B cell (primary cell): ENCODE measurements at regions of chr14 and their contacts with region 1.

Region 1: DNA sequence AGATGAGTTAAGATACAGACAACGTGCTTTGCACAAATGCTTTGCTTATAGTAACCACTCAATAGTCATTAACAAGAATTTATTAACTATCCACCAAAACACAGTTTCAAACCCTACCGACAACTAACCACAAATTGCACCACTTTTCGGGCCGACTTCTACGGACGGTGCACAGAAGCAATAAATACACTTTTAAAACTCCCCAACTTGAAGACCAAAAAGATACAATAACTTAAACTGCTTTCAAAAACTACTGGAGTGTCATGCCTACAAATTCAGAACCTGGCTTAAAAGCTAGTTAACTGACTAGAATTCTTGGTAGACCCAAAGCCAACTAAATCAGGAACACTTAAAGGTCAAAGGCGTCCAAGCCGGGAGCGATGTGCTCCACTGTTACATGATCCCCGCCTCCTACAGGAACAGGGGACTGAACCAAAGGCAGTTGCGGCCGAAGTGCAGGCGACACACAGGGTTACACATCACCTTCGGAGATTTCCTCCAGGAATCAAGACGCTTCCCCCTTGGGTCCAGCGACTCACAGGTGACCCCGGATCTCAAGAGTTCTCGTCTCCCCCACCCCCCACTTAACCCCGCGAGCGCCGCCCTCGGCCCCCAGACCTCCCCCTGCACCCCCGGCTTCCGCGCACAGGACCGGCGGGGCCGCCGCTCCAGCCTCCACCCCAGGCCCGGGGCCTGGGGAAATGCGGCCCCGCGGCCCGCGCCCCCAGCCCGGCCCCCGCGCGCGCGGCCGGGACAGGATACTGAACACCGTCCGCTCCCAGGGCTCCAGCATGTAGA is 507 bp downstream of the SPTSSA start:
- DNase-seq: peak; percentile 50
- ATAC-seq: no peak
- H3K4me3 ChIP-seq: peak overlapping the region; percentile 50 to 95 (median 64)
- H3K4me3 Mint-ChIP-seq: peak overlapping the region; percentile 86
- H3K27ac ChIP-seq: peak overlapping the region; percentile 16 to 60
- H3K27ac Mint-ChIP-seq: peak overlapping the region; percentile 91
- H3K4me1 ChIP-seq: peaks cover 8 to 15% of the 10 kb centered on the region in 2 donors
- H3K4me1 Mint-ChIP-seq: peaks cover 18% of the 10 kb centered on the region
- H3K27me3 ChIP-seq: no peaks in the 10 kb centered on the region
- H3K27me3 Mint-ChIP-seq: no peaks in the 10 kb centered on the region
- CTCF ChIP-seq: no peak

Region 2: DNA sequence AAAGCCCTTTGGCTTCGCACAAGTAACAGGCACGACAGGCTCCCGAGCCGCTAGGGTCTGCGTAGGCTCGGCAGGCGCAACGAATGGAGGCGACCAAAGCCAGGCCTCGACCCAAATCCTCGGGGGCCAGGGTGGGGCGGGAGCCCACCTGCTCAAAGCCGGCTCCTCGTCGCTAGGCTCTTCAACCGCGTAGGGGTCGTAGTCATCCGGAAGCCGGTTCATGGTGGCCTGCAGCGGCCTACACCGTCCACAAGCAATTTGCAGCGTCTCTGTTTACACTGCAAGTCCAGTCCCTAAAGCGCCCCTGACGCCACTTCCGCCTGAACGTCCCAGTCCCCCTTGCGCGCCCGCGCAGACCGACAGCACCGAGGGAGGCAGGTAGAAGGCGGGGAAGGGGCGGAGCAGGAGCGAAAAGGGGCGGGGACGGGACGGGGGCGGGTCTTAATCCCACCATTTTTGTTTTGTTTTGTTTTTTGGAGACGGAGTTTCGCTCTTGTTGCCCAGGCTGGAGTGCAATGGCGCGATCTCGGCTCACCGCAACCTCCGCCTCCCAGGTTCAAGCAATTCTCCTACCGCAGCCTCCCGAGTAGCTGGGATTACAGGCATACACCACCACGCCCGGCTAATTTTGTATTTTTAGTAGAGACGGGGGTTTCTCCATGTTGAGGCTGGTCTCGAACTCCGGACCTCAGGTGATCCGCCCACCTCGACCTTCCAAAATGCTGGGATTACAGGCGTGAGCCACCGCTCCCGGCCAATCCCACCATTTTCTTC is 78.1 kb after region 1 on chr14 and contains the start of gene EAPP:
- CTCF ChIA-PET with region 1: no interaction called
- POLR2A ChIA-PET with region 1: no interaction called
- intact Hi-C with region 1: loop called (anchors 5 kb)
- DNase-seq: peak; percentile 96
- ATAC-seq: peak; percentile 99
- H3K4me3 ChIP-seq: peak within 1 kb of the TSS; percentile 44 to 97 (median 89)
- H3K4me3 Mint-ChIP-seq: peak within 1 kb of the TSS; percentile 99
- H3K27ac ChIP-seq: peak within 1 kb of the TSS; percentile 91 to 97
- H3K27ac Mint-ChIP-seq: peak within 1 kb of the TSS; percentile 99
- H3K4me1 ChIP-seq: peaks cover 18 to 24% of the 10 kb centered on the region in 2 donors
- H3K4me1 Mint-ChIP-seq: peaks cover 21% of the 10 kb centered on the region
- H3K27me3 ChIP-seq: no peaks in the 10 kb centered on the region
- H3K27me3 Mint-ChIP-seq: no peaks in the 10 kb centered on the region
- CTCF ChIP-seq: no peak
- total RNA-seq, gene EAPP: 54.8 and 58.0 TPM in 2 replicates

Region 3: DNA sequence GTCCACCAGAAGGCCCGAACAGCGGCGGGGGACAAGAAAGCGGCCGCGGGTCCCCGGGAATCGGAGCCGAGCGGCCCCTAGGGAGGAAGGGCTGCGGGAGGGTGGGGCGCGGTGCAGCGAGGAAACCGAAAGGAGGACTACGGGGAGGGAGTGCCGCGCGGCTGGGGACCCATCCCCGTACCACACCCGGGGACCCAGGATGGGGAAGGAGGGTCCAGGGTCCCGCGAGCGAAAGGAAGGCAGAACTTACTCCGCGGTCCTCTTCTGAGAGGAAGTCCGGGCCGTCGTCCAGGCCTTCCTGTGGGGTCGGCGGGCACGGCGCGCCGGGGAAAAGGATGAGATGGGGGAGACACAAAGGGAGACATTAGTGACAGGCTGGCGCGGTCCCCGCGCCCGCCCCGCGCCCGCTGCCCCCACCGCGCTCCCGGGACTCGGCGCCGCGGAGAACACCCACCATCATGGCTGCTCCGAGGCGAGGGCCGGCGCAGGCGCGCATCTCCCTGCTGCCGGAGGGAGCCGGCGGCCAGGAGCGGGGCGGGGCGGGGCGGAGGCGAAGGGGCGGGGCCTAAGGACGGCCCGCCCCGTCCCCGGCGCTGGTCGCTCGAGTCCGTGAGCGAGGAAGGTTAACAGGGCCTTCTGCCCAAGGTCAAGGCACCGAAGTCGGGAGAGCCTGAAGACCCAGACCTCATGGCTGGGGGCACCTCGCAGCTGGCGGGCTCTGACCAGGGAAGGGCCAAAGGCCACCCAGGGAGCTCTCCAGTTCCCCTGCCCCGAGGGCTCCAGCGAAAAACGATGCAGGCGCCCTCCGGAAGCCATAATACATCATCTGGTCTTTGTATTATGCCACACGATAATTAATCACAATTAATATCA is 168.4 kb after region 1 on chr14 and contains the start of gene SNX6:
- CTCF ChIA-PET with region 1: no interaction called
- POLR2A ChIA-PET with region 1: no interaction called
- intact Hi-C with region 1: loop called (anchors 1 kb)
- DNase-seq: peak; percentile 89
- ATAC-seq: peak; percentile 98
- H3K4me3 ChIP-seq: peak within 1 kb of the TSS; percentile 50 to 98 (median 96)
- H3K4me3 Mint-ChIP-seq: peak within 1 kb of the TSS; percentile 95
- H3K27ac ChIP-seq: peak within 1 kb of the TSS; percentile 85 to 94
- H3K27ac Mint-ChIP-seq: peak within 1 kb of the TSS; percentile 93
- H3K4me1 ChIP-seq: peaks cover 11 to 18% of the 10 kb centered on the region in 2 donors
- H3K4me1 Mint-ChIP-seq: peaks cover 18% of the 10 kb centered on the region
- H3K27me3 ChIP-seq: peaks cover 0 to 3% (median 0%) of the 10 kb centered on the region in 4 experiments
- H3K27me3 Mint-ChIP-seq: no peaks in the 10 kb centered on the region
- CTCF ChIP-seq: no peak
- total RNA-seq, gene SNX6: 61.0 and 66.3 TPM in 2 replicates

Region 4: GRCh38 chr14:35808076-35808652 is 1346.6 kb after region 1 on chr14:
- CTCF ChIA-PET with region 1: no interaction called
- POLR2A ChIA-PET with region 1: no interaction called
- intact Hi-C with region 1: loop called (anchors 5 kb)
- DNase-seq: no peak
- ATAC-seq: no peak
- H3K4me3 ChIP-seq: peak overlapping the region; percentile 57 to 81 (median 70)
- H3K4me3 Mint-ChIP-seq: peak overlapping the region; percentile 98
- H3K27ac ChIP-seq: peak overlapping the region; percentile 78 to 88
- H3K27ac Mint-ChIP-seq: peak overlapping the region; percentile 95
- H3K4me1 ChIP-seq: peaks cover 12 to 14% of the 10 kb centered on the region in 2 donors
- H3K4me1 Mint-ChIP-seq: peaks cover 29% of the 10 kb centered on the region
- H3K27me3 ChIP-seq: no peaks in the 10 kb centered on the region
- H3K27me3 Mint-ChIP-seq: no peaks in the 10 kb centered on the region
- CTCF ChIP-seq: no peak